Ovary (tissue), 10 donors: ENCODE measurements at regions of chr3 and their contacts with region 1.

Region 1: DNA sequence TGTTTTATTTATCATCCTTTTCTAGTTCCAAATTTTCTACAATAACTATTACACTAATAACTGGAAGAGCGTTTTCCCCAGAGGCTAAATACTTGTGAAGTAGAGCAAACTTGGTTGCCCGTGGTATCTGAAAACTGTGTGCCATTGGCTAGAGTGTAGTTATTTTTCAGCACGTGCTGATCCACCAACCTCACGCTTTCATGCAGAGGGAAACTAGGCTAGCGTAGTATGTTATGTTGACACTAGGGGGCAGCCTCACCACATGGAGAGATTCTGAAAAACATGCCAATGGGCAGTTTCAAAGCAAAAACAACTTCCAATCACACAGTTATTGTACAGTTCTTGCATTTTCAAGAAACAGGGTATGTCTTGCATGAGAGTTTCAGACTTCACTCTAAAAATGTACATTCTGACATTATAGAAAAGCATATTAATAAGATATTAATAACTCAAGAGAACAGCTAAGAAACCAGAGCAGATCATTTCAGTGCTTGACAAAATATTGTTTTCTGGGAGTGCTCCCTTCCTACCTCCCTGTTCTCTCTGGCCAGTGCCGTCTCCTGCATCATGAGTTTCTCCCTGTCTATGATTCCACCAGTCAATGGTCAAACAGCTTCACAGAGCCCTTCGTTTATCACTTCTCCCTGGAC is 39.7 kb downstream of the SPATA12 start:
- DNase-seq: peak; percentile 62 to 85 (median 69)
- H3K4me3 ChIP-seq: no peak overlapping the region
- H3K27ac ChIP-seq: no peak overlapping the region
- H3K4me1 ChIP-seq: no peaks in the 10 kb centered on the region
- H3K27me3 ChIP-seq: no peaks in the 10 kb centered on the region
- CTCF ChIP-seq: peak; percentile 64 to 92 (median 89)
- EP300 ChIP-seq: no peak
- POLR2A ChIP-seq: no peak

Region 2: DNA sequence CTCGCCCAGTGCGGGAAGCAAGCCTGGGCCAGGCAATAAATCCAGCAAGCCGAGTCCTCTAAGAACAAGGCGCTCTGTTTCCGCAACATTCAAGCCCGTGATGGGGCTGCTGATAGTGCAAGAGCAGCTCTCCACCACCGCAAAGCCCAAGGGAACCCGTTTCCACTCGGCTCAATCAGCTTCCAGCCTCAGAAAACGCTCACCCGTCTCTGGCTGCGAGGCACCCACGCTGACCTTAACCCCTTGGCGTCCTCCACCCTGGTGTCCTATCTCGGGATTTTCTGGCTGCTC is 21.9 kb before region 1 on chr3:
- intact Hi-C with region 1: no loop called
- DNase-seq: peak in 4 of 5 donors; percentile 32 to 65 (median 46)
- H3K4me3 ChIP-seq: peak overlapping the region; percentile 64
- H3K27ac ChIP-seq: no peak overlapping the region
- H3K4me1 ChIP-seq: peaks cover 5% of the 10 kb centered on the region
- H3K27me3 ChIP-seq: no peaks in the 10 kb centered on the region
- CTCF ChIP-seq: no peak
- EP300 ChIP-seq: no peak
- POLR2A ChIP-seq: no peak

Region 3: GRCh38 chr3:57164657-57165573 is 64.7 kb after region 1 on chr3 and contains the start of gene IL17RD:
- intact Hi-C with region 1: loop called in 2 of 4 experiments (anchors 5 to 10 kb)
- DNase-seq: peak; percentile 86 to 93 (median 88)
- H3K4me3 ChIP-seq: peak within 1 kb of the TSS; percentile 90
- H3K27ac ChIP-seq: peak within 1 kb of the TSS; percentile 69 to 70
- H3K4me1 ChIP-seq: peaks cover 21% of the 10 kb centered on the region
- H3K27me3 ChIP-seq: no peaks in the 10 kb centered on the region
- CTCF ChIP-seq: no peak
- EP300 ChIP-seq: no peak
- POLR2A ChIP-seq: peak; percentile 48
- total RNA-seq, gene IL17RD: 14.4 to 35.8 (median 27.0) TPM